HCT116 (cell line): ENCODE measurements at regions of chr2 and their contacts with region 1.

Region 1: GRCh38 chr2:217993817-217994463 is 8.9 kb downstream of the TNS1 start:
- DNase-seq: no peak
- ATAC-seq: peak; percentile 96
- H3K4me3 ChIP-seq: no peak overlapping the region
- H3K27ac ChIP-seq: no peak overlapping the region
- H3K4me1 ChIP-seq: peaks cover 14 to 28% of the 10 kb centered on the region in 2 experiments
- H3K27me3 ChIP-seq: no peaks in the 10 kb centered on the region
- CTCF ChIP-seq: peak; percentile 56 to 93 (median 88)
- POLR2A ChIP-seq: no peak
- RAD21 ChIP-seq: no peak

Region 2: DNA sequence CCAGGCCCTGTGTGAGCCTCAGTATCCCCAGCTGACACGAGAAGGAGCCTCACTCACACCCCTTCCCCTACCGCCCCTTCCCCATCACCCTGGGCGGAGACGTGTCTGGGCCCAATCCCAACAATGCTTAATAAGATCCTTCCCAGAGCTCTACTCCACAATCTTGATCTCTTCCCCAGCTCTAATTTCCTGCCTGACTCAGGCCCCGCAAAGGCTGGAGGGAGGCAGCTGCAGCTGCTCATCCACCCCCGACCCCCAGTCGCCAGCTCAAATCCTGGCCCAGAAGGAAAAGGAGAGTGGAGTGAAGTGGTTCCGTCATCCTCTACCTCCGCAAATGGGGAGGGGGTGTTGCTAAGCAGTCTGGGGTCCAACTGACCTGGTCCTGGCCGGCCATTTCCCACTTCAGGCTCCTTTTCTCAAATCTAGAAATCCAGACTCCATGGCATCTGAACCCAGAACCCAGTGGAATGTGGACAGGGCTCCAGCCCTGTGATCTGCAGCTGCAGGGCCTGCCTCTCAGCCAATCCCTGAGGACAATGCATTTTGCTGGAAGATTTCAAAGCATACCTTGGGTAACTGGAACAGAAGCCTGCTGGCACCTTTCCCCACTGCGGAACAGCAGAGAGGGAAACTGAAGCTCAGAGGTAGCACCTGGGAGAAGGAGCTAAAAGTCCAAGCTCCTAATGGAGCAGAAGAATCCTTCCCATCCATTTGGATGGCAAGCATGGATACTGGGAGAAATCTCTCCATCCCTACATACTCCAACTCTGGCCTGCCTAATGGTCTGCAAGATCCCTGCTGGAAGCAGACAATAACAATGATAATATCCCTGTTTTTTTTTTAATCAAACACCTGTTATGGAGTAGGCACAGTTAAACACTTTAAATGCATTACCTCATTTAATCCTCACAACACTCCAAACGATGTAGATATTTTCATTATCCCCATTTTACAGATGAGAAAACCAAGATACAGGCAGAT is 14.4 kb after region 1 on chr2:
- CTCF ChIA-PET with region 1: interaction called, 26 read pairs
- POLR2A ChIA-PET with region 1: no interaction called
- RAD21 ChIA-PET with region 1: no interaction called
- intact Hi-C with region 1: no loop called
- DNase-seq: no peak
- ATAC-seq: no peak
- H3K4me3 ChIP-seq: no peak overlapping the region
- H3K27ac ChIP-seq: no peak overlapping the region
- H3K4me1 ChIP-seq: peaks cover 15 to 42% of the 10 kb centered on the region in 2 experiments
- H3K27me3 ChIP-seq: no peaks in the 10 kb centered on the region
- CTCF ChIP-seq: no peak
- POLR2A ChIP-seq: no peak
- RAD21 ChIP-seq: no peak